RWPE1 (cell line): ENCODE measurements at regions of chr16 and their contacts with region 1.

Region 1: DNA sequence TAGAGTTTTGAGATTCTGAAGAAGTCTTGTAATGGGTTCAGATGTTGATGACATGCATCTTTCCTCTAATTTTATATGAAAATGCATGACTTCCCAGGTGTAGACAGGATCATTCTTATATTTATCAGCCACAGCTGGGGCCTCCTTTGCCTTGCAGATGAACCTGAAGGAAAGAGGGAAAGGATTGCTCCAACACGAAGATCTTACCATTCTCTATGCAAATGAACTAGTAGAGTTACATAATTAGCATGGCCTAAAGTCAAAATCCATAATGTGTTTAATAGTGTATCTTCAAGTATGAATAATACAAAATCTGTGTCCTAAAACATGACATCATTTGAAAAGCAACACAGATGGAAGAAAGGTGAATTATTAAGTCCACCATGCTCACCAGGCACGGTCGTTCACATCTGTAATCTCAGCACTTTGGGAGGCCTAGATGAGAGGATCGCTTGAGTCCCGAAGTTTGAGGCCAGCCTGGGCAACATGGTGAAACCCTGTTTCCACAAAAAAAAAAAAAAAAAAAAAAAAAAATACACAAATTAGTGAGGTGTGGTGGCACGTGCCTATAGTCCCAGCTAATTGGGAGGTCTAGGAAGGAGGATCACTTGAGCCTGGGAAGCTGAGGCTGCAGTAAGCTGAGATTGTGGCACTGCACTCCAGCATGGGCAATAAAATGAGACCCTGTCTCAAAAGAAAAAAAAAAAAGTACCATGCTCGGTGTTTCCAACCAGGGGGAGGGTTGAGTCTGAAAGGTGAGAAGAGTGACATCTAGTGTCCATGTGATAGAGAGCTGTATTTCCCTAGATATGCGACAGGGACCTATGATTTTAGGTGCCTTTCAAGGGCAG is 6.3 kb downstream of the VWA3A start:
- DNase-seq: peak; percentile 75
- H3K27ac ChIP-seq: no peak overlapping the region
- CTCF ChIP-seq: peak; percentile 74

Region 2: DNA sequence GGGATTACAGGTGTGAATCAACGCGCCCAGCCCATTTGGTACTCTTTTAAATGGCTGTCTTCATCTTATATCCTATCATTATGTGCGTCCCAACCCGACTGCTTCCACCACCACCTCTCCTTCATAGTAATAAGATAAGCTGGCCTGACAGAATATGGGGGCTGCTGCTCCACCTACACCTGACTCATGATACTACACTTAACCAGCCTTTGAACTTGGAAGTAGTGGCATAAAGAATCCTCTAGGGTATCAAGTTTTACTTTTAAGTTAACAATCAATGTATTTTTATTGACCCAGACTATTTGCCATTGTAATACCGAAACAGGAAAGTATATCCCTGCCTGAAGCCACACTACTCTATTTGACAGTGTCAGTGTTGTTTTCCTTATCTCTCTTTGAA is 116.5 kb before region 1 on chr16:
- CTCF ChIA-PET with region 1: interaction called, 10 read pairs
- POLR2A ChIA-PET with region 1: no interaction called
- DNase-seq: no peak
- H3K27ac ChIP-seq: no peak overlapping the region
- CTCF ChIP-seq: no peak

Region 3: GRCh38 chr16:21989133-21989532 is 109.5 kb before region 1 on chr16:
- CTCF ChIA-PET with region 1: interaction called, 18 read pairs
- POLR2A ChIA-PET with region 1: interaction called, 10 read pairs
- DNase-seq: no peak
- H3K27ac ChIP-seq: no peak overlapping the region
- CTCF ChIP-seq: no peak

Region 4: DNA sequence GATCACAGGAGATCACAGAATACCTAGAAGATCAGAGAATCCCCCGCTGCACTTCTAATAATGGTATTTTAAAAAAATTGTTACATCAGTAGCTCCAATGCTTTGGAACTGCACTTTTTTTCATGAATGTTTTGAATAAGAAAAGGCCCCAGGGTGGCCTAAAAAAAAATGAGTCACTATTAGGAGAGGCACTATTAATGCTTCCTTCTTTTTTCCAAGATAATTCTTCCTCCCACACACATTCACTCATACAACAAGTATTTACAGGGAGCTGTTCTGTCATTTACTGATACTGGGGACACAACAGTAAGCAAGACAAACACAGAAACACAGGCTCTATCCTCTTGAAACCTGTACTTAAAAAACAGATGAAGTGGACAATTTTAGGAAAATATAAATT is 97.0 kb before region 1 on chr16:
- CTCF ChIA-PET with region 1: interaction called, 16 read pairs
- POLR2A ChIA-PET with region 1: no interaction called
- DNase-seq: peak; percentile 78
- H3K27ac ChIP-seq: no peak overlapping the region
- CTCF ChIP-seq: no peak

Region 5: DNA sequence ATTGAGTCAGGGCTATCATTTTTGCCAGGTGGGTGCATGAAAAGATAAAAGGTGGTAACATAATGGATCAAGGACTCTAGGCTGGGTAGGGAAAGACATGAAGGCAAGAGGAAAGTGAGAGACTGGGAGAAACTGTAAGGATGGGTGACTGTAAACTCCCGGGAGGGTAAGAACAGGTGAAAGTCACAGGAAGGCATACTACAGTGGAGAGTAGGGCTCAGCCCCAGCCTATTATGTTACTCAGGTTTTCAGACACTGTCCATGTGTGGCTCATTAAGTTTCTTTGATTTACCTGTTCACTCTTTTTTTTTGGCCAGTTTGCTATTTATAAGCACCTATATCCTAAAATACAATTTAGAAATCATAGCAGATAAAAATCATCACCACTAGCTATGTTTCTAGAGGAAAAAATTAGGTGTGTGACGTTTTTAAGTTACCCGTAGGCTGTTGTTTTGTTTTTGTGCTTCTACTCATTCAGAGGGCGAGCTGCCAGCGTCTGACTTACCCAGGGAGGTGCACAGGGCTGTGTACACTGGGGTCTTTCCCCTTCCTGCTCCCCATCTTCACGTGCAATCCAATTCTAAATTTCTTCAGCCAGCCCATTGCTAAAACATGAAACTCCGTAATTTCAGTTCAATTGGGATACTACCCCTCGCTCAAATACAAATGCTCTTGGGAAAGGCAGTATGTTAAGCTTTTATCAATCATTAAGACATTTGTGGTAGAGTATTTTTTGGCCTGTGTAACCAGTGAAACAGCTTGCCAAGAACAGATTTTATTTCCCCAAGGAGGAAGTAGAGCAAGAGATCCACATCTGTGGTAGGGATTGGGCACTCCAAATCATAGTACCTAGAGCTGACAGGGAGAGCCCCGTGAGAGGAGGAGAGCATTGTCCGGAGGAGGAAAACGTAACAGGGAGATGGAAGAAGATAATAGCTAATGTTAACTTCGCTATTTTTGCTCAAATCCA is 28.0 kb before region 1 on chr16:
- CTCF ChIA-PET with region 1: no interaction called
- POLR2A ChIA-PET with region 1: no interaction called
- DNase-seq: peak; percentile 37
- H3K27ac ChIP-seq: peak overlapping the region; percentile 52; the same call in 1 of the 2 replicates
- CTCF ChIP-seq: no peak